ENCODE measurements at regions of chr11 and their contacts with region 1.

Region 1: GRCh38 chr11:10933455-10934292 is 75.8 kb upstream of the ZBED5 start:
- DNase-seq: peak; percentile 39
- ATAC-seq: peak; percentile 94
- H3K4me3 ChIP-seq: no peak overlapping the region
- H3K27ac ChIP-seq: no peak overlapping the region
- H3K4me1 ChIP-seq: no peaks in the 10 kb centered on the region
- H3K27me3 ChIP-seq: peaks cover 4 to 13% of the 10 kb centered on the region in 2 experiments
- CTCF ChIP-seq: peak; percentile 91 to 97 (median 95); a peak in 5 of 6 replicates
- EP300 ChIP-seq: no peak
- POLR2A ChIP-seq: no peak
- RAD21 ChIP-seq: peak; percentile 86

Region 2: GRCh38 chr11:11016068-11016467 is 82.4 kb after region 1 on chr11:
- CTCF ChIA-PET with region 1: interaction called, 59 read pairs
- POLR2A ChIA-PET with region 1: no interaction called
- RAD21 ChIA-PET with region 1: interaction called, 38 read pairs
- SMC1A ChIA-PET with region 1: interaction called, 20 read pairs
- in situ Hi-C with region 1: loop called (anchors 5 kb)
- intact Hi-C with region 1: no loop called
- DNase-seq: no peak
- ATAC-seq: no peak
- H3K4me3 ChIP-seq: no peak overlapping the region
- H3K27ac ChIP-seq: no peak overlapping the region
- H3K4me1 ChIP-seq: no peaks in the 10 kb centered on the region
- H3K27me3 ChIP-seq: peaks cover 0 to 6% of the 10 kb centered on the region in 2 experiments; a peak in 2 of 4 replicates
- CTCF ChIP-seq: no peak
- EP300 ChIP-seq: no peak
- POLR2A ChIP-seq: no peak
- RAD21 ChIP-seq: no peak

Region 3: GRCh38 chr11:11022125-11022730 is 88.6 kb after region 1 on chr11:
- CTCF ChIA-PET with region 1: interaction called, 91 read pairs
- POLR2A ChIA-PET with region 1: no interaction called
- RAD21 ChIA-PET with region 1: interaction called, 38 read pairs
- SMC1A ChIA-PET with region 1: interaction called, 20 read pairs
- in situ Hi-C with region 1: loop called (anchors 5 kb)
- intact Hi-C with region 1: loop called (anchors 1 kb)
- DNase-seq: no peak
- ATAC-seq: peak; percentile 58; the same call in 2 of the 3 replicates
- H3K4me3 ChIP-seq: no peak overlapping the region
- H3K27ac ChIP-seq: no peak overlapping the region
- H3K4me1 ChIP-seq: no peaks in the 10 kb centered on the region
- H3K27me3 ChIP-seq: peaks cover 0 to 2% of the 10 kb centered on the region in 2 experiments; a peak in 1 of 4 replicates
- CTCF ChIP-seq: peak; percentile 20 to 46 (median 31); a peak in 3 of 6 replicates
- EP300 ChIP-seq: no peak
- POLR2A ChIP-seq: no peak
- RAD21 ChIP-seq: peak; percentile 38

Region 4: DNA sequence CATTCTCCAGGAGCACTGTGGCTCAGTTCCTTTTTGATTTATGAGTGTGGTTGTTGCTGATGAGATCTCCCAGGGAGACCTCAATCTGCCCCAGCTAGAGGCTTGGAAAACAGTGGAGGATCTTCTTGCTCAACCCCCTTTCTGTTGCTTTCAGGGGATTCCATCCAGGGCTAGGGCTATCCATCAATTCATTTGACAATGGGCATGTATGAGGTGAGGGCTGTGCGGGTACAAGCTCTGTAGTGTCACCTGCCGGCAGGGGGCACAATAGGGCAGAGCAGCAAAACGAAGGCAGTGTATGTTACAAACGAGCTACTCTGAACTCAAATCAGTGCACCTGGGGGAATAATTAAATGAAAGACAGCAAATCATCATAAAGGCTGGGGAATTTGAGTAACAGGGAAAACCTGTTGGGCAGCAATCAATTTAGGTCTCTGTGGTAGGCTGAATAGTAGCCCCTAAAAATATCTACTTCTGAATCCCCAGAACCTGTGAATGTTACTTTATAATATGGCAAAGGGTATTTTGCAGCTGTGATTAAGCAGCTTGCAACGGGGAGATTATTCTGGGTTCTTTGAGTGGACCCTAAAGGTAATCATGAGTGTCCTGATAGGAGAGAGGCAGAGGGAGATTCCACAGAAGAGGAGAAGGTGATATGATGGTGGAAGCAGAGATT is 94.5 kb after region 1 on chr11:
- CTCF ChIA-PET with region 1: interaction called, 91 read pairs
- POLR2A ChIA-PET with region 1: no interaction called
- RAD21 ChIA-PET with region 1: interaction called, 18 read pairs
- SMC1A ChIA-PET with region 1: interaction called, 11 read pairs
- in situ Hi-C with region 1: loop called (anchors 5 kb)
- intact Hi-C with region 1: no loop called
- DNase-seq: no peak
- ATAC-seq: peak; percentile 97
- H3K4me3 ChIP-seq: no peak overlapping the region
- H3K27ac ChIP-seq: no peak overlapping the region
- H3K4me1 ChIP-seq: no peaks in the 10 kb centered on the region
- H3K27me3 ChIP-seq: peaks cover 0 to 2% of the 10 kb centered on the region in 2 experiments; a peak in 2 of 4 replicates
- CTCF ChIP-seq: peak; percentile 81 to 88 (median 83)
- EP300 ChIP-seq: no peak
- POLR2A ChIP-seq: no peak
- RAD21 ChIP-seq: peak; percentile 74

Region 5: DNA sequence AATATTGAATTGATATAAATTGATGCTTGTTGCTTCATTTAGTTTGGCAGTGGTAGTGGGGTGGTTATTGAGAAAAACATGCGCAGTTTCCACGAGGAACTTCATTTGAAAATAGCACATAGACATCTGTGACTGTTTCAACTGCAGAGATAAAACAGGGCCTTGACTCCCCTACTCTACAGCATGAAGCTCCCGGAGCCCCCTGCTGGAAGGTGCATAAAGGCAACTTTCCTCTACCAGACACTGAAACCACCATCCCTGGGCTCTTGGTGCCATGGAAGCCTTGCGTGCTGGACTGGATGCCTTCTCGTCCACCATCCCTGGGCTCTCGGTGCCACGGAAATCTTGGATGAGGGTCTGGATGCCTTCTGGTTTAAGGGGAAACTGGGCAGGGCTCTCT is 223.5 kb after region 1 on chr11:
- CTCF ChIA-PET with region 1: no interaction called
- POLR2A ChIA-PET with region 1: no interaction called
- RAD21 ChIA-PET with region 1: no interaction called
- SMC1A ChIA-PET with region 1: no interaction called
- in situ Hi-C with region 1: no loop called
- intact Hi-C with region 1: loop called (anchors 10 kb)
- DNase-seq: no peak
- ATAC-seq: peak; percentile 73
- H3K4me3 ChIP-seq: no peak overlapping the region
- H3K27ac ChIP-seq: no peak overlapping the region
- H3K4me1 ChIP-seq: no peaks in the 10 kb centered on the region
- H3K27me3 ChIP-seq: no peaks in the 10 kb centered on the region; a peak in 1 of 4 replicates
- CTCF ChIP-seq: peak; percentile 30 to 52 (median 37); a peak in 5 of 6 replicates
- EP300 ChIP-seq: no peak
- POLR2A ChIP-seq: no peak
- RAD21 ChIP-seq: peak; percentile 40

Measured in GM12878 (cell line).